Heart left ventricle (tissue), 16 donors: ENCODE measurements at regions of chr9 and their contacts with region 1.

Region 1: GRCh38 chr9:89388084-89388867 is 70.0 kb downstream of the SECISBP2 start:
- DNase-seq: peak in 4 of 5 donors; percentile 27 to 63 (median 41)
- ATAC-seq: peak; percentile 52 to 72 (median 70)
- H3K4me3 ChIP-seq: no peak overlapping the region
- H3K27ac ChIP-seq: peak overlapping the region in 7 of 12 donors; percentile 25 to 83 (median 41)
- H3K4me1 ChIP-seq: peaks cover 0 to 22% (median 3%) of the 10 kb centered on the region in 12 donors
- H3K27me3 ChIP-seq: no peaks in the 10 kb centered on the region
- CTCF ChIP-seq: no peak
- POLR2A ChIP-seq: no peak

Region 2: DNA sequence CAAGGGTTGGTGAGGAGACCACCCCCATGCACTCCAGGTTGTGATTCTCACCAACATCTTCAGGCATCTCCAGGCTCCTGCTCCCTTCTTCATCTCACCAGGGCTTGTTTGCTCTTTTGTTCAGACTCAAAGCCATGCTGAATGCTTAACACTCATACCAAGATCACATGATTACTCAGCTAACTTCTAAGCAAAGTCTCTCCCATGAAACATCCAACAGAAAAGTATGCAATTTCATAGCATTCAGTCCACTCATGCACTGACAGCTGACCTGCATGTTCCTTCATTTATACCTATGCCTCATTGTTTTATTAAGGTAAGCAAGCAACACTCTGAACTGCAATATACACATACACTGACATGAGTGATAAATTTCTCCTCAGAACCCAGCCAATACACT is 278.6 kb before region 1 on chr9:
- intact Hi-C with region 1: no loop called
- DNase-seq: no peak
- ATAC-seq: no peak
- H3K4me3 ChIP-seq: no peak overlapping the region
- H3K27ac ChIP-seq: no peak overlapping the region
- H3K4me1 ChIP-seq: no peaks in the 10 kb centered on the region
- H3K27me3 ChIP-seq: peaks cover 0 to 4% (median 0%) of the 10 kb centered on the region in 9 donors
- CTCF ChIP-seq: no peak
- POLR2A ChIP-seq: no peak

Region 3: DNA sequence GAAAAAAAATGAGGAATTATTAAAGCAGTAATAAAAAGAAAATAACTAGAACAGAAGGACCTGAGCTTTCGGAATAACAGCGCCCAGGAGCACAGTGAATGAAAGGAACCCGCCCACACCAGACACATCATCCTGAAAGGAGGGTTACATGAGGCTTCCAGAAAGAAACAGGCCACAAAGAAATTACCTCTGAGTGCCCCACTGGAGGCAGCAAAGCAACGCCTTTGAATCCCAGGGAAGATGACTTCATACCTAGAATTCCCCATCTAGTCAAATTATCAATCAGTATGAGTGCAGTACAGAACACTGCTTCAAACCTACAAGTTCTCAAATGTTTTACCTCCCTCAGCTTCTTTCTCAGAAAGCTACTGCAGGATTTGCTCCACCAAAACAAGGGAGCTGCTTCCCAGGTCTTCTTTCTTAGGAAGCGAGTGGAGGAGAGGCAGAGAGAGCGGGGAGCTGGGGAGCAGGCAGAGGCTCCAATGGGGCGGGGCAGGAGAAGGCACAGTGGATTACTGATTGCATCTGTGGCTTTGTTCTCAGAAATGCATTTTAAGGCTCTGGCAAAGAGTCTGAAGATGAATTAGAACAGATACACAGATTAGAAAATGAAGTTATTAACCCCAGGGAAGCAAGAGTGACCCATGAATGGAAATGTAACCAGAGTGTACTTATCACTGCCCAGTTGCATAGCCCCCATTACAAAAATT is 22.5 kb after region 1 on chr9:
- intact Hi-C with region 1: loop called in 1 of 10 experiments (anchors 2 kb)
- DNase-seq: no peak
- ATAC-seq: no peak
- H3K4me3 ChIP-seq: no peak overlapping the region
- H3K27ac ChIP-seq: no peak overlapping the region
- H3K4me1 ChIP-seq: peaks cover 0 to 63% (median 8%) of the 10 kb centered on the region in 12 donors
- H3K27me3 ChIP-seq: no peaks in the 10 kb centered on the region
- CTCF ChIP-seq: no peak
- POLR2A ChIP-seq: no peak

Region 4: DNA sequence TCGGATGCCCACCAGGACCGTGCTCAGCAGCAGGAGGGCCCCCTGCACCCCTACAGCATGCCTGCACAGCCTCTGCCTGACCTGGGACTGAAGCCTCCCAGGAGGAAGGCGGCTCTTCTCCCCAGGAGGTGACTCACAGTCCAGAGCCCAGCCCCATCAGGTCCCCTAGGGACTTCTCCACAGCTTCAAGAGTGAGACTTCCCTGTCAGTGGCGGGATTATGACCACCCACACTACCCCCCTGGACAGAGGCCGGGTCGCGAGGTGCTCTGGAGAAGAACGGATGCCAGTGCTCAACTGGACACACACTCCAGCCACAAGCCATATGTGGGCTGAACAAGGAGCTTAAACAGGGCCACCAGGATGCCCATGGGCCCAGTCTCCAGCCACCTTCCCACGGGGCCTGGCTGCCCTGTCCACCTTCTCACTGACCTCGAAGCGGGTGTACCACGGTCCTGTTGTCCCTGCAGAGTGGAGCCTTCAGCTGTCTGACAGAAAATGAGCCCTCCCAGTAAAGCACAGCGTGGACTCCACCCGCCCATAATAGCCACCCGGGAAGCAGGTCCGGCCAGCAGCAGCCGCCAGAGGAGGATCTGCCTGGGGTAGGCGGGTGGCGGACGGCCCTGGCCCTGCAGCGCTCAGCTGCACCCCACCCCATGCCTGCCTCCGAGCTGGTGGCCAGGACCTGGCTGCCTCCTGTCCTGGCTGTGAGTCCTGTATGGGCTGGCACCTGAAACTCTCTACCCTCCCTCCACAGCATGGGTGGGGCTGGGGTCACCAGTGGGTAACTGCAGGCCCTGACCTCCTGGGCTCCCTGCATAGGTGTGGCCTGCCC is 54.9 kb after region 1 on chr9:
- intact Hi-C with region 1: loop called in 1 of 10 experiments (anchors 10 kb)
- DNase-seq: no peak
- ATAC-seq: no peak
- H3K4me3 ChIP-seq: no peak overlapping the region
- H3K27ac ChIP-seq: no peak overlapping the region
- H3K4me1 ChIP-seq: peaks cover 0 to 77% (median 3%) of the 10 kb centered on the region in 12 donors
- H3K27me3 ChIP-seq: no peaks in the 10 kb centered on the region
- CTCF ChIP-seq: no peak
- POLR2A ChIP-seq: no peak

Region 5: DNA sequence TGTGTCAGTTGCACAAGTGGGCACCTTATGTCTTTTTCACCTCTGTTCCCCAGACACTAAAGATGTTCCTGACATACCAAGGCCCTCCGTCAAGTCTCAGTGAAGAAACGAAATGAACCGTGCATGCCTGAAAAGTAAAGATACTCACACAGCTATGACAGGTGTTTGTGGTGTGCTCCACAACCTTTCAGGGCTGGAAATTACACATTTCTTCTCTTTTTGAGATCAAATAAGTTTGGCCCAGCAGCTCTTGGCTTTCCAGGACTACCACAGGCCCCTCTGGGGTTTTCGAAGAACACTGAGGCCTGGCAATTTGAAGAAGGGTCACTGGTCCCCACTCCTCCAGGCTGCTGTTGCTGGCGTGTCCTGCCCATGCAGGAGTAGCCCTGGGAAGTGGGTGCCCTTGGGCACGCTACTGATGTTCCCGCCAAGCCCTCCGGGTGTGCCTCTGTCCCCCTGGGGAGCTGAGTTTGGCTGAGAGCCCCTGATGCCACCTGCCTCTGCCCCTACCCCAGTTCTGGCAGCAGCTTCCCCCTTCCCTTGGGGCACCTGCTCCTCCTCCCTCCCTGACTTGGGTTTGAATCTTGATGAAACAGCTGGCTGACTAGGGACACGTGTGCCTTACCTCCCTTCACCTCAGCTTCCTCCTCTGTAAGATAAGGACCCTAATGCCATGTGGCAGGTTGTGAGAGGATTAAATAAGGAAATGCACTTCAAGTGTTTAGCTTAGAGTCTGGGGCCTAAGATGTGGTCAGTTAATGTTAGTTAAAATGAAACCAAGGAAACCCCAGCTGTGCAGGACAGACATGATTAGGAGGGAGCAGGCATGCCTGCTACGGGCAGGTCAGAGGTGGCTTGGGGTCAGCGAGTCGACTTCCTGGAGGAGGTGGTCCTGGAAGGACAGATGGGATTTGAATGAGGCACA is 167.4 kb after region 1 on chr9:
- intact Hi-C with region 1: loop called in 1 of 10 experiments (anchors 10 kb)
- DNase-seq: no peak
- ATAC-seq: no peak
- H3K4me3 ChIP-seq: no peak overlapping the region
- H3K27ac ChIP-seq: peak overlapping the region in 2 of 12 donors; percentile 43 to 70
- H3K4me1 ChIP-seq: peaks cover 0 to 31% (median 0%) of the 10 kb centered on the region in 12 donors
- H3K27me3 ChIP-seq: no peaks in the 10 kb centered on the region
- CTCF ChIP-seq: no peak
- POLR2A ChIP-seq: no peak